Naive thymus-derived CD4-positive, alpha-beta T cell (primary cell): ENCODE measurements at regions of chr1 and their contacts with region 1.

Region 1: DNA sequence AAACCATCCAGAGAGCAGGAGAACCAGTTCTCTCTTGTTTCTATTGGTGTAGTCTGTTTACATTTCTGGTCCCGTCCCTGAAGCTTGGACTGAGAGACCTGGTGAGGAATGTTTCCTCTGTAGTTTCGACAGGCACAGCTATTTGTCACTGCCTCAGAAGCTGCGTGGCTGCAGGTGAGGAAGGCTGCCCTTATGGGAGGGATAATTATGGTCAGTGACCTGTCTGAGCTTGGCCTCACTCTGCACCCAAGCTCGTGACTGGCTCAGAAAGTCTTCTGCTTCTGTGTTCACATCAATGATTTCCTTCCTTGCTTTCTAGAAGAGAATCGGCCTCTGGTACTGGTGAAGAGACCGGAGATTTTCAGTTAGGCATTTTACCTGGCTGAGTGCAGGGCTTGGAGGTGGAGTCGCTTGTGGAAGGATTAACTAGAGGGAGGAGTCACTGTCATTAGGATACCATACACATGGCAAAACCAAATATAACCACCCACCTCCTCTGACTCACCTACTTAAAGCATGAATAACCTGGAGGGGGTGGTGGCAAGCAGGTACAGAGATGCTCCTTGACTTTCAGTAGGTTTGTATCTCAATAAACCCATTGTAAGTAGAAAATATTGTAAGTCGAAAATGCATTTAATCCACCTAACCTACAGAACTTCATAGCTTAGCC is 19.9 kb upstream of the WDR26 start:
- DNase-seq: no peak
- ATAC-seq: no peak
- H3K4me3 ChIP-seq: no peak overlapping the region
- H3K4me3 Mint-ChIP-seq: no peak overlapping the region
- H3K27ac ChIP-seq: no peak overlapping the region
- H3K27ac Mint-ChIP-seq: peak overlapping the region in 4 of 9 donors; percentile 20 to 68 (median 44)
- H3K4me1 ChIP-seq: peaks cover 3% of the 10 kb centered on the region in 2 donors
- H3K4me1 Mint-ChIP-seq: peaks cover 13 to 35% (median 19%) of the 10 kb centered on the region in 7 donors
- H3K27me3 ChIP-seq: no peaks in the 10 kb centered on the region
- H3K27me3 Mint-ChIP-seq: no peaks in the 10 kb centered on the region

Region 2: GRCh38 chr1:224245188-224245587 is 209.3 kb before region 1 on chr1:
- CTCF ChIA-PET with region 1: interaction called, 6 read pairs
- POLR2A ChIA-PET with region 1: no interaction called
- intact Hi-C with region 1: loop called in 1 of 2 experiments (anchors 2 kb)
- DNase-seq: peak in 6 of 9 donors; percentile 17 to 62 (median 47)
- ATAC-seq: peak; percentile 85
- H3K4me3 ChIP-seq: no peak overlapping the region
- H3K4me3 Mint-ChIP-seq: peak overlapping the region; percentile 53 to 79 (median 62)
- H3K27ac ChIP-seq: peak overlapping the region; percentile 48
- H3K27ac Mint-ChIP-seq: peak overlapping the region; percentile 85 to 97 (median 94)
- H3K4me1 ChIP-seq: peaks cover 10 to 20% of the 10 kb centered on the region in 2 donors
- H3K4me1 Mint-ChIP-seq: peaks cover 0 to 30% (median 29%) of the 10 kb centered on the region in 7 donors
- H3K27me3 ChIP-seq: no peaks in the 10 kb centered on the region
- H3K27me3 Mint-ChIP-seq: no peaks in the 10 kb centered on the region

Region 3: GRCh38 chr1:224377676-224378006 is 76.9 kb before region 1 on chr1:
- CTCF ChIA-PET with region 1: no interaction called
- POLR2A ChIA-PET with region 1: no interaction called
- intact Hi-C with region 1: loop called in 1 of 2 experiments (anchors 5 kb)
- DNase-seq: no peak
- ATAC-seq: peak; percentile 46
- H3K4me3 ChIP-seq: no peak overlapping the region
- H3K4me3 Mint-ChIP-seq: peak overlapping the region; percentile 34 to 82 (median 64)
- H3K27ac ChIP-seq: no peak overlapping the region
- H3K27ac Mint-ChIP-seq: peak overlapping the region; percentile 53 to 93 (median 81)
- H3K4me1 ChIP-seq: peaks cover 74 to 76% of the 10 kb centered on the region in 2 donors
- H3K4me1 Mint-ChIP-seq: peaks cover 74 to 97% (median 92%) of the 10 kb centered on the region in 7 donors
- H3K27me3 ChIP-seq: no peaks in the 10 kb centered on the region
- H3K27me3 Mint-ChIP-seq: no peaks in the 10 kb centered on the region

Region 4: DNA sequence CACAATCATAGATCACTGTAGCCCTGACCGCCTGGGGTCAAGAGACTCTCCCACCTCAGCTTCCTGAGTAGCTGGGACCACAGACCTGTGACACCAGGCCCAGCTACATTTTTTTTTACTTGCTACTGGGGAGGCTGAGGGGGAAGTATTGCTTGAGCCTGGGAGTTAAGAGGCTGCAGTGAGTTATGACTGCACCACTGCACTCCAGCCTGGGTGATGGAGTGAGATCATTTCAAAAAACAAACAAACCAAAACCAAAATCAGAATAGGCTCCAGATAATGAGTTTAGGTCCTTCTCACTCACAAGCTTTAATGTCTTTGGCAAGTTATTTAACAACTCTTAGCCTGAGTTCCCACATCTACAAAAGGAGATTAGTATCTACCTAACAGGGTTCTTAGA is 42.8 kb before region 1 on chr1:
- CTCF ChIA-PET with region 1: interaction called, 9 read pairs
- POLR2A ChIA-PET with region 1: no interaction called
- intact Hi-C with region 1: loop called (anchors 2 to 10 kb)
- DNase-seq: no peak
- ATAC-seq: peak; percentile 37
- H3K4me3 ChIP-seq: no peak overlapping the region
- H3K4me3 Mint-ChIP-seq: no peak overlapping the region
- H3K27ac ChIP-seq: no peak overlapping the region
- H3K27ac Mint-ChIP-seq: peak overlapping the region in 7 of 9 donors; percentile 15 to 72 (median 38)
- H3K4me1 ChIP-seq: no peaks in the 10 kb centered on the region
- H3K4me1 Mint-ChIP-seq: peaks cover 7 to 35% (median 15%) of the 10 kb centered on the region in 7 donors
- H3K27me3 ChIP-seq: no peaks in the 10 kb centered on the region
- H3K27me3 Mint-ChIP-seq: no peaks in the 10 kb centered on the region

Region 5: DNA sequence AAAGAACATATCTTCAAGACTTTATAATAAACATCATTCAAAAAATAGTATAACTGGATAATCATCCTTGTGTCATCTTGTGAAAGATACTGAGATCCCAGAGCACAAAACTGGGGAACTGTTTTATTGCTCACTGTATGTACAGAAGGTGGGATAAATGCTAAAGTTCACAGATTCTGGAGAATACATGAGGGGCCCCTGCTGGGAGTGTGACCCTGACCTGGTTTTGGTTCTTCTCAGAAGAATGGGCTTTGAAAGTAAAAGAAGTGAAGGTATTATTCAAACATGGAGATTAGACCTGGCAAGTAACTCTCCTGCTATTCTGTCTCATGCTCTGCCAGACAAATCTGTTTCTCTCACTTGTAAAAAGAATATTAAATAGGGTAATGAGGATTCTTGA is 34.4 kb before region 1 on chr1:
- CTCF ChIA-PET with region 1: interaction called, 5 read pairs
- POLR2A ChIA-PET with region 1: no interaction called
- intact Hi-C with region 1: loop called (anchors 5 kb)
- DNase-seq: no peak
- ATAC-seq: no peak
- H3K4me3 ChIP-seq: no peak overlapping the region
- H3K4me3 Mint-ChIP-seq: no peak overlapping the region
- H3K27ac ChIP-seq: no peak overlapping the region
- H3K27ac Mint-ChIP-seq: no peak overlapping the region
- H3K4me1 ChIP-seq: peaks cover 0 to under 1% of the 10 kb centered on the region in 2 donors
- H3K4me1 Mint-ChIP-seq: peaks cover 11 to 36% (median 19%) of the 10 kb centered on the region in 7 donors
- H3K27me3 ChIP-seq: no peaks in the 10 kb centered on the region
- H3K27me3 Mint-ChIP-seq: no peaks in the 10 kb centered on the region

Region 6: GRCh38 chr1:224497714-224498573 is 43.4 kb after region 1 on chr1:
- CTCF ChIA-PET with region 1: no interaction called
- POLR2A ChIA-PET with region 1: no interaction called
- intact Hi-C with region 1: loop called in 1 of 2 experiments (anchors 5 kb)
- DNase-seq: peak in 1 of 9 donors; percentile 62
- ATAC-seq: peak; percentile 88
- H3K4me3 ChIP-seq: no peak overlapping the region
- H3K4me3 Mint-ChIP-seq: peak overlapping the region in 2 of 10 donors; percentile 34 to 67
- H3K27ac ChIP-seq: no peak overlapping the region
- H3K27ac Mint-ChIP-seq: peak overlapping the region in 5 of 9 donors; percentile 19 to 91 (median 55)
- H3K4me1 ChIP-seq: peaks cover 0 to 14% of the 10 kb centered on the region in 2 donors
- H3K4me1 Mint-ChIP-seq: peaks cover 19 to 55% (median 25%) of the 10 kb centered on the region in 7 donors
- H3K27me3 ChIP-seq: no peaks in the 10 kb centered on the region
- H3K27me3 Mint-ChIP-seq: no peaks in the 10 kb centered on the region